PC-9 (cell line): ENCODE measurements at regions of chr6 and their contacts with region 1.

Region 1: DNA sequence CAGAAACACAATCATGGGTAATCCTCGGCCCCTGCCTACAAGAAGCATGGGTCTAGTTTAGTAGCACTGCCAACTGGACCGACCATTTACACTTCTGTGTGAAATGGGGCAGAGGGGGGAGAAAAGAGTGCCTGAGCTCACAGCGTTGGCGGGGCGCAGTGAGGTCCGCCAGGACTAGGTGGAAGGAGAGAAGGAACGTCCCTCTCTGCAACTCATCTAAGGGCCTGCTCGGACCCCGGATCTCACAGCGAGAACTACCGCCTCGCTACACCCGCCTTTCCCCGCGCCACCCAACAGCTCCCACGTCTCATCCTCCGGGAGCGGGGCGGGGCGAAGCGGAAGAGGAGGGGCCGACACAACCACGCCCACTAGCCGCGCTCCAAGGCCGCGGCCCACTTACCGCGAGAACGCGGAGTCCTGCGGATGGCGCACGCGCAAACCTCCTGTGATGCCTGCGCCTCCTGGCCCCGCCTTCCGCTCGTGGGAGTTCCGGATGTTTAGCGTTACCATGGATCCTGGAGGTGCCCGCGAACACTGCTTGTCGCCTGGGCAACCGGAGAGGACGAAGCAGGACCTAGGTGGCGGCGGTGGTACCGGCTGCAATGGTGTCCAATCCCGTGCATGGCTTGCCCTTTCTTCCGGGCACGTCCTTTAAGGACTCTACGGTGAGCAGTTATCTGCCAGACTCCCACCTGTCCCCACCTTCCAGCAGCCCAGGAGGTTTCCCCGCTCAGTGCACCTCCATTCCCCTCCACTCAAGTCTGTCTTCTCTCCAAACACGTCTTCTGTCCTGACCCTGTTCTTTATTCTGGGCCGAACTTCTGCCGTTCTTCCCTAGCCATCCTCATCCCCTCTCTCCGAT is at the start of gene EFHC1:
- DNase-seq: peak; percentile 91 to 98
- H3K4me3 ChIP-seq: peak within 1 kb of the TSS; percentile 75
- H3K27ac ChIP-seq: peak within 1 kb of the TSS; percentile 56
- H3K4me1 ChIP-seq: peaks cover 59% of the 10 kb centered on the region
- H3K27me3 ChIP-seq: no peaks in the 10 kb centered on the region
- CTCF ChIP-seq: no peak
- total RNA-seq, gene EFHC1: 35.8 and 45.0 TPM in 2 replicates

Region 2: DNA sequence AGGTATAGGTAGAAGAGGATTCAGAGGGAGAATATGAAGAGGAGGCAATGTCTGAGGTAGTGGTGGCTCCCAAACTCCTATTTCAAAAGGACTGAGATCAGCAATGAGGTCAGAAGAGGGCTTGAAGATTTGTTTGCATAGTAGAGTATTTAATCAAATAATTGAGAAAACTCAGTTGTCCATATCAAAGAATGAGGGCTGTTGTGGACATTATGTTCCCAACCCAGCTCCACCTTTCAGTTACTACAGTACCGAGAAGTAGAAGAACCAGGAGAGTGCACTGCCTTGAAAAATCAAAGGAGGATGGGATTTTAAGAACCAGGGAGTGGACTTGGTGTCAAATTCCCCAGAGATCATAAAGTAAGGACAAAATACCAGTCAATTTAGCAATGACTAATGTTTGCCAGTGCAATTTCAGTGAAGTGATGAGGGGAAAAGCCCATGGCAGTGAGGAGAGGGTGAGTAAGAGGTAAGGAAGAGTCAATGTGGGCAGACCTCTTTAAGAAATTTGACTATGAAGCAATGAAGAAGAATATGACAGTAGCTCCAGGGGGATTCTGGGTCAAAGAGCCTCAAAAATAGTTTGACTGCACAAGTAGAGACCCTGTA is 715.0 kb before region 1 on chr6:
- CTCF ChIA-PET with region 1: no interaction called
- POLR2A ChIA-PET with region 1: no interaction called
- intact Hi-C with region 1: no loop called
- DNase-seq: no peak
- H3K4me3 ChIP-seq: no peak overlapping the region
- H3K27ac ChIP-seq: no peak overlapping the region
- H3K4me1 ChIP-seq: no peaks in the 10 kb centered on the region
- H3K27me3 ChIP-seq: no peaks in the 10 kb centered on the region
- CTCF ChIP-seq: no peak

Region 3: DNA sequence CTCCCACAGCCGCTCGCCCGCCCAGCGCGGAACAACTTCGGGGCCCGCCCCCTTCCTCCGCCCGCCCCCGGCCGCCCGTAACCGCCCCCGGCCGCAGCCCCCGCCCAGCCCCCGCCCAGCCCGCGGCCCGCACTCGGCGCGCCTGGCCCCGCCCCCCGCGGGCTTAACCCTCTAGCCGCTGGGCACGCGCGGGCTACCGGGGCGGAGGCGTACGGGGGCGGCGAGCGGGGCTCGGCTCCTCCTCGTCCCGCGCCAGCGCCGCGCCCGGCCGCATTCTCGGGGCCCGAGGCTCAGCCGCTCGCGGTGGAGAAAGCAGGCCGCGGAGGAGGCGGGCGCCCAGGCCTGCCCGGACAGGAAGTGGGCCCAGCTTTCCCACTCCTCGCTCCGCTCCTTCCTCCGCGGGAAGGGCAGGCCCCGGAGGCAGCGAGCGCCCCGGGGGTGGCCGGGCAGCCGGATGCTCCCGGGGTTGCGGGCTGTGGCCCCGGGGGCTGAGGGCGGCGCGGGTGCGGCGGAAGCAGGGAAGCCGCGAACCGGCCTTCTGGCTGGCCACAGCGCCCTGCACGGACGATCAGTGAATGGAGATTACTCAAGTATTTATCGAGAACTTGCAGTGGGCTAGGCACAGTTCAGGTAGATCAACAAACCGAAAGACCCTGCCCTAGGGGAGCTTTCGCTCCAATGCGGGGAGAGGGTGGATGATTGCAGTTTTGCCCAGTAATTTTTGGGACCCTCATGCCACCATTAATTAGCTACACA is 157.2 kb after region 1 on chr6 and contains the start of gene TRAM2:
- CTCF ChIA-PET with region 1: interaction called, 6 read pairs
- POLR2A ChIA-PET with region 1: no interaction called
- intact Hi-C with region 1: loop called (anchors 1 kb)
- DNase-seq: peak; percentile 48 to 86
- H3K4me3 ChIP-seq: peak within 1 kb of the TSS; percentile 67
- H3K27ac ChIP-seq: peak within 1 kb of the TSS; percentile 83
- H3K4me1 ChIP-seq: peaks cover 34% of the 10 kb centered on the region
- H3K27me3 ChIP-seq: no peaks in the 10 kb centered on the region
- CTCF ChIP-seq: no peak
- total RNA-seq, gene TRAM2: 28.1 and 40.9 TPM in 2 replicates

Region 4: DNA sequence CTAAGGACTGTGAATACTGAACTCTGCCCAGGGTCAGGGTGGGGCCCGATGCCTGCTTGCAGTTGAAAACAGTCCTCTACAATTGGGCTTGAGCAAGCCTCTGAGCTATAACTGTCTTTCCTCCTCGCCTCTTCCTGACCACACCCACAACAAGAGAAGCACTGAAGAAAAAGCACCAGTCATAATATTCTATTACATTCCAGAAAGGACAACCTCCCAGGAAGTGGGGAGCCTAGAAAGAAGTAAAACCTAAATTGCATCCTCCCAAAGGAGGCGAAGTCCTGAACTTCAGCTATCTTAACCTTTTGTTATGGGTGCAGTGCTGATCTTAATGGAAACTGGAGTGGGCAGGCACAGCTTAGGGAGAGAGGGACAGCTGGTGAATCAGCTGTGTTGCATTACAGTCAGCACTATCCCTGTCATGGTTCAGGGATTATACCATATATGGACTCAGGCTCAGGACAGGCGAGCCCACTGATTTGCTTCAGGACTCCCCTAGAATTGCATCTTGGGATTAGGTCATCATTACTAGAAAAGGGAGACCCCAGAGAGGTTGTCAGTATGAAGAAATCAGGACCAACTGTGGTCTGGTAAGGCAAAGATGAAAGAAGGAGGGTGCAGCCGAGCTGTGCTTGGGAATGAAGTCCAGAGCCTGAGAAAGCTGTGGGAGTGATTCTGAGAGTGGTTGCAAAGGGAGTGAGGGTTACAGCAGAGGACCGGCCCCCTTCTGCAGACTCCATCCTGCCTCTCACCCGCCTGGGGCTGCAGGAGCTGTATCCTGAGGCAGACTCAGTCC is 175.2 kb after region 1 on chr6:
- CTCF ChIA-PET with region 1: interaction called, 3 read pairs
- POLR2A ChIA-PET with region 1: no interaction called
- intact Hi-C with region 1: loop called (anchors 5 kb)
- DNase-seq: no peak
- H3K4me3 ChIP-seq: no peak overlapping the region
- H3K27ac ChIP-seq: no peak overlapping the region
- H3K4me1 ChIP-seq: peaks cover 11% of the 10 kb centered on the region
- H3K27me3 ChIP-seq: no peaks in the 10 kb centered on the region
- CTCF ChIP-seq: no peak